Activated CD4-positive, alpha-beta memory T cell treated with anti-CD3 and anti-CD28 coated beads for 36 hours (primary cell): ENCODE measurements at regions of chr1 and their contacts with region 1.

Region 1: DNA sequence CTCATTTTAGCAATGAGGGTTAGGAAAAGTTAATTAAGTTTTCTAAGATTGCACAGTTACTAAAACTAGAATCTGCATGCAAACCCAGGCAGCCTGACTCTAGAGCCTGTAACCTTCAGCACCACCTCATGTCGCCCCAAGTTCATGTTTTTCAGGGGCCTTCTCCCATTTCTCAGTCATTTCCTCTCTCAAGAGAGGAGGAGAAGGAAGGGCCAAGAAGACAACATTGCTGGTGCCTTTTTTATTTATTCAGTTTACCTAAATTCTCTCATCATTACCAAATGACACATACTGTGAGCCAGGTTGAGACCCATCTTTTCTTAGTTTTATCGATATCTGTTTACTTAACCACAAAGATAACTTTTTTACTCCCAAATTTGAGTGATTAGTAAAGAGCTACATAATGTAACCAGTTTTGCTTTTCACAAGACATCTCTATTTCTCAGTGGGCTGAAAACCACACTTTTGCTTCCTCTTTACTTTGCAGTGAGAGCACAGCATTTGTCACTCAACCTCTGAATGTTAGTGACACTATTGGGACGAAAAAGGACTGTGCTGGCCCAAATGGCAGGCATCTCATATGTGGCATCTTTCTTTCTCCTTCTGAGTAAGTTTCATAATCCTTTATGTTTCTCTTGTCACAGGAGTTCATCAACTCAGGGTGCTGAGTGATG is at the start of gene CD101:
- DNase-seq: peak; percentile 66
- H3K4me3 Mint-ChIP-seq: no peak within 1 kb of the TSS
- H3K27ac Mint-ChIP-seq: peak within 1 kb of the TSS; percentile 26
- H3K4me1 Mint-ChIP-seq: peaks cover 31% of the 10 kb centered on the region
- H3K27me3 Mint-ChIP-seq: no peaks in the 10 kb centered on the region
- total RNA-seq, gene CD101: 0.14 to 0.19 TPM

Region 2: GRCh38 chr1:116763787-116764465 is 237.5 kb before region 1 on chr1:
- CTCF ChIA-PET with region 1: no interaction called
- POLR2A ChIA-PET with region 1: interaction called, 5 read pairs
- intact Hi-C with region 1: loop called (anchors 1 kb)
- DNase-seq: peak; percentile 79
- H3K4me3 Mint-ChIP-seq: peak overlapping the region; percentile 99
- H3K27ac Mint-ChIP-seq: peak overlapping the region; percentile 99
- H3K4me1 Mint-ChIP-seq: peaks cover 88% of the 10 kb centered on the region
- H3K27me3 Mint-ChIP-seq: peaks cover 3% of the 10 kb centered on the region

Region 3: GRCh38 chr1:116873680-116874271 is 127.6 kb before region 1 on chr1:
- CTCF ChIA-PET with region 1: no interaction called
- POLR2A ChIA-PET with region 1: no interaction called
- intact Hi-C with region 1: loop called (anchors 2 kb)
- DNase-seq: peak; percentile 62
- H3K4me3 Mint-ChIP-seq: no peak overlapping the region
- H3K27ac Mint-ChIP-seq: peak overlapping the region; percentile 35
- H3K4me1 Mint-ChIP-seq: peaks cover 20% of the 10 kb centered on the region
- H3K27me3 Mint-ChIP-seq: no peaks in the 10 kb centered on the region

Region 4: GRCh38 chr1:116987256-116987555 is 14.2 kb before region 1 on chr1:
- CTCF ChIA-PET with region 1: interaction called, 3 read pairs
- POLR2A ChIA-PET with region 1: interaction called, 5 read pairs
- intact Hi-C with region 1: loop called (anchors 2 kb)
- DNase-seq: peak; percentile 78
- H3K4me3 Mint-ChIP-seq: peak overlapping the region; percentile 76
- H3K27ac Mint-ChIP-seq: peak overlapping the region; percentile 90
- H3K4me1 Mint-ChIP-seq: peaks cover 28% of the 10 kb centered on the region
- H3K27me3 Mint-ChIP-seq: no peaks in the 10 kb centered on the region

Region 5: DNA sequence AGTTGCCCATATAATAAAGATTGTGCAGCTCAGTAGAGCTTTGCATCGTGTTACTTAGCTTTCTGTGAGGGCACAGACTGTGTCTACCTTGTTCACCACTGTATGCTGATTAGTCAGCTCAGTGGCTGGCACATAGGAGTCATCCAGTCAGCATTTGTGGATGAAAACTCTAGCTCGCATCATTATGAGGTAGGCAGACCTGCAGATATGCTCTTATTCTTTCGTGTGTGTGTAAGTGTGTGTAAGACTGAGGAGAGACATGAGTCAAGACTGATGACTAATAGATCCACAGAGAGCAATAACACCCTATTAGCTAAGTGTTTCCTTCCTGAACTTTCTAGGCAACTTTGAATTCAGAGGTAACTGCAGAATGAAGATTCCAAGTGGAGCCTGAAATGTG is 75.9 kb after region 1 on chr1:
- CTCF ChIA-PET with region 1: no interaction called
- POLR2A ChIA-PET with region 1: no interaction called
- intact Hi-C with region 1: loop called (anchors 2 kb)
- DNase-seq: peak; percentile 79
- H3K4me3 Mint-ChIP-seq: no peak overlapping the region
- H3K27ac Mint-ChIP-seq: peak overlapping the region; percentile 71
- H3K4me1 Mint-ChIP-seq: peaks cover 30% of the 10 kb centered on the region
- H3K27me3 Mint-ChIP-seq: no peaks in the 10 kb centered on the region

Region 6: GRCh38 chr1:117121776-117122697 is 120.6 kb after region 1 on chr1:
- CTCF ChIA-PET with region 1: no interaction called
- POLR2A ChIA-PET with region 1: no interaction called
- intact Hi-C with region 1: no loop called
- DNase-seq: peak; percentile 91
- H3K4me3 Mint-ChIP-seq: peak overlapping the region; percentile 72
- H3K27ac Mint-ChIP-seq: no peak overlapping the region
- H3K4me1 Mint-ChIP-seq: peaks cover 8% of the 10 kb centered on the region
- H3K27me3 Mint-ChIP-seq: peaks cover 8% of the 10 kb centered on the region